CD8-positive, alpha-beta T cell (primary cell): ENCODE measurements at regions of chr14 and their contacts with region 1.

Region 1: DNA sequence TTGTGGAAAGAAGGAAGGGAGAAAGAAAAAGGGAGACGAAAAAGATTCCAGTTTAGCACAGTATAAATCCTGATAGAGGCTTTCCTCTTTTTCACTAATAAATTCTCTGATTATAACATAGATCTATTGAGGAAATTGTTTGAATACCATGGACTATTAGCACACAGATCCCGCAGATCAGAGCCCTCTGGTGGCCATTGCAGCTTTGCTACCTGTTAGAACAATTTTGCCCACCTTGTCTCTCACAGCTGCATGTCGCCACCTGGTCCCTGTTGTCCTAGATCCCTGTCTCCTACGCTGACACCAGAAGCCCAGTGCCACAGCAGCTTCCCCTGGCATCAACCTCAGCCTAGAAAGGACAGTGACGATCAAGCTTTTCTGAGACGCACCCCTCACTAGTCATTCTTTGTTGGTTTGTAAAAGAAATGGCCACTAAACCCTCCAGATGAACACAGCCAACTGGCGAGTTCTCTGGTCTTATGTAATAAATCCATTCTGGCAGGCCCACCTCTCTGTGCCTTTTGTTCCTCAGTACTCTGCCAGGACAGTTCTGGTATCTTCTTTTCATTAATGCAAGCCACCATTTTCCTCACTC is 9.9 kb downstream of the GPHB5 start:
- DNase-seq: peak in 4 of 9 experiments; percentile 8 to 23 (median 17)
- ATAC-seq: no peak
- H3K4me3 ChIP-seq: no peak overlapping the region
- H3K4me3 Mint-ChIP-seq: no peak overlapping the region
- H3K27ac ChIP-seq: no peak overlapping the region
- H3K27ac Mint-ChIP-seq: no peak overlapping the region
- H3K4me1 ChIP-seq: no peaks in the 10 kb centered on the region
- H3K4me1 Mint-ChIP-seq: no peaks in the 10 kb centered on the region
- H3K27me3 ChIP-seq: no peaks in the 10 kb centered on the region
- H3K27me3 Mint-ChIP-seq: peaks cover 6% of the 10 kb centered on the region
- CTCF ChIP-seq: peak; percentile 32

Region 2: GRCh38 chr14:62162998-62163589 is 1145.7 kb before region 1 on chr14:
- CTCF ChIA-PET with region 1: no interaction called
- POLR2A ChIA-PET with region 1: no interaction called
- intact Hi-C with region 1: loop called (anchors 2 to 10 kb)
- DNase-seq: peak in 2 of 9 experiments; percentile 28 to 39
- ATAC-seq: no peak
- H3K4me3 ChIP-seq: no peak overlapping the region
- H3K4me3 Mint-ChIP-seq: no peak overlapping the region
- H3K27ac ChIP-seq: no peak overlapping the region
- H3K27ac Mint-ChIP-seq: no peak overlapping the region
- H3K4me1 ChIP-seq: no peaks in the 10 kb centered on the region
- H3K4me1 Mint-ChIP-seq: no peaks in the 10 kb centered on the region
- H3K27me3 ChIP-seq: peaks cover 0 to 5% of the 10 kb centered on the region in 2 experiments
- H3K27me3 Mint-ChIP-seq: peaks cover 20% of the 10 kb centered on the region
- CTCF ChIP-seq: peak; percentile 42